ENCODE measurements at regions of chr6 and their contacts with region 1.

Region 1: GRCh38 chr6:30571075-30571768 is at the start of gene ABCF1:
- DNase-seq: peak; percentile 85 to 99
- H3K4me3 ChIP-seq: peak within 1 kb of the TSS; percentile 80
- H3K27ac ChIP-seq: peak within 1 kb of the TSS; percentile 49
- H3K4me1 ChIP-seq: peaks cover 33% of the 10 kb centered on the region
- H3K27me3 ChIP-seq: no peaks in the 10 kb centered on the region
- CTCF ChIP-seq: no peak
- total RNA-seq, gene ABCF1: 64.0 and 73.7 TPM in 2 replicates

Region 2: GRCh38 chr6:30515932-30516753 is 55.1 kb before region 1 on chr6:
- CTCF ChIA-PET with region 1: no interaction called
- POLR2A ChIA-PET with region 1: interaction called, 14 read pairs
- intact Hi-C with region 1: no loop called
- DNase-seq: peak; percentile 87 to 96
- H3K4me3 ChIP-seq: peak overlapping the region; percentile 58
- H3K27ac ChIP-seq: peak overlapping the region; percentile 96
- H3K4me1 ChIP-seq: peaks cover 15% of the 10 kb centered on the region
- H3K27me3 ChIP-seq: no peaks in the 10 kb centered on the region
- CTCF ChIP-seq: no peak

Region 3: DNA sequence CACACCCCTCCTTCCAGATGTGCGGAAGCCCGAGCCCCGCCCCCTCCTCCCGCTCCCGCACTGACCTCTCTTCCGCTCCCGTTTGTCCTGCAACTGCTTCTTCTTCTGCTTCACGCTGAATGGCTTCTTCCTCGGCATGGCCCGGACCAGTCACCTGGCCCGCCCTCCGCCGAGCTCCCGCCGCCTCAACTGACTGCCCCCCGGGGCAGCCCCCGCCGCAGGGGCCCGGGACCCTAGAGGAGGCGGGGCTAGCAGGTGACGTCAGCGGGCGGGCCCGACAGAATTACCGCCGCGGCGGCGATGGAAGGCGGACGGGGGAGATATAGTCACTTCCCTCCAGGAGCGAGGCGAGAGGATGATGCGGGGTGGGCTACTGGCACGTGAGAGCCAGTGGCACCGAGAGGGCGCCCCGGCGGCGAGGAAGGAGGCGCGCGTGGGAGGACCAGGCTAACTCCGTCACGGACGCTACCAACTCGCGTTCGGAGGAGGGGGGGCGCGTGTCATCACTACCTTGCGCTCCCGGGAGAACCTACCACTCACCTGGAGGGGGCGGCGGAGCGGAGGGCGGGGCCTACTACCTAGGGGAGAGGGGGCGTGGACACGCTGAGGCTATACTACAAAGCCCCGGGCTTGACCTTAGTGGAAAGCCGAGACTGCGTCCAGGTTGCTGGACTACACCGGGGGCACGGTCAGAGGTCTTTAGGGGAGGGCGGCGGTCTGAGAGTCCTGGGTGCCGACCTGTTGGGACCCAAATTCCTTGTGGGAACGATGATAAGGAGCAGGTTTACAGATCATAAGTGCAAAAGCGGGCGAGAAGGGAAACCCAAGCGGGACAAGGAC is 14.9 kb before region 1 on chr6 and contains the start of gene GNL1:
- CTCF ChIA-PET with region 1: no interaction called
- POLR2A ChIA-PET with region 1: interaction called, 11 read pairs
- intact Hi-C with region 1: loop called (anchors 1 kb)
- DNase-seq: peak; percentile 89 to 99
- H3K4me3 ChIP-seq: peak within 1 kb of the TSS; percentile 99
- H3K27ac ChIP-seq: peak within 1 kb of the TSS; percentile 79
- H3K4me1 ChIP-seq: peaks cover 17% of the 10 kb centered on the region
- H3K27me3 ChIP-seq: no peaks in the 10 kb centered on the region
- CTCF ChIP-seq: no peak
- total RNA-seq, gene GNL1: 114 and 123 TPM in 2 replicates